ENCODE measurements at regions of chr17 and their contacts with region 1.

Region 1: DNA sequence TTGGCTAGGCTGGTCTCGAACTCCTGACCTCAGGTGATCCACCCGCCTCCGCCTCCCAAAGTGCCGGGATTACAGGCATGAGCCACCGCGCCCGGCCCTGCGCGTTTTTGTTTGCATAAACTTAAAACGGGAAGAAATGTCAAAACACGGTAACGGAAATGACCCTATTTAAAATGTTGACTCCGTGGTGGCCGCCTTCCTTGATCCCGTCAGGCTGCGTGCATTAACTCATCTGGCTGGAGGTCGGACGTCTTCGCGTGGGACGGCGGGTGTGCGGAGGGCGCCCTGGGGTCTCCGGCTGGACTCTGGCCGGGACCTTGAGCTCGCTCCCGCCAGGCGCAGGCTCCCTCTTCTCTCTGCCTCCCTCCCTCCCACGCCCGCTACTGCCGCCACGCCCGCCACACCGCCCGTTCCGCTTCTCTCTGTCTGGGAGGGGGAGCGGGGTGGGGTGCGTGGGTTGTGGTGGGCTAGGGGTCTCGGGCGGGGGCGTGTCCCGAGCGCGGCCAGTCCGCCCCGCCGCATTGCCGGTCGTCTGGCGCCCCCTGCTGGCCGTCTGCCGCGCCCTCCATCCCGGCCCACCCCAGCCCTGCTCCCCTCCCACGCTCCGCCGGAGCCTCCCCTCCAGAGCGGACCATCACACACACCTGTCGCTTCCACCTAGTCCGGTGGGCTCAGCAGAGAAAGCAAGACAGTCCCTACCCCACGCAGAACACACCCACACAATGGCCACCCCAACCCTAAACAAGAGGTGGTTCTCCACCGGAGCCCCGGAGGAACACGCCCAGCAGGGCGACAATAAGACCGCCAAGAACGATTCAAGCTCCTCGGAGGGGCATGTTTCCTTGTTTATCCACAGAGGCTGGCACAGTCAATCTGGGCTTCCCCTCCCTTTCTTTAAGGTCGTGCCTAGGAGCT is 1.2 kb upstream of the CCDC42 start:
- DNase-seq: peak; percentile 62
- H3K4me3 ChIP-seq: peak overlapping the region; percentile 23 to 58 (median 30)
- H3K27ac ChIP-seq: no peak overlapping the region
- H3K4me1 ChIP-seq: peaks cover 5% of the 10 kb centered on the region
- H3K27me3 ChIP-seq: peaks cover 12 to 13% of the 10 kb centered on the region in 2 experiments
- CTCF ChIP-seq: peak; percentile 51 to 86
- POLR2A ChIP-seq: no peak

Region 2: GRCh38 chr17:8383143-8383822 is 362.6 kb before region 1 on chr17 and contains the start of gene RPL26:
- CTCF ChIA-PET with region 1: interaction called, 19 read pairs
- POLR2A ChIA-PET with region 1: no interaction called
- dilution Hi-C with region 1: no loop called
- intact Hi-C with region 1: loop called (anchors 1 kb)
- DNase-seq: peak; percentile 98
- H3K4me3 ChIP-seq: peak within 1 kb of the TSS; percentile 76 to 100 (median 99)
- H3K27ac ChIP-seq: peak within 1 kb of the TSS; percentile 78
- H3K4me1 ChIP-seq: peaks cover 39% of the 10 kb centered on the region
- H3K27me3 ChIP-seq: no peaks in the 10 kb centered on the region
- CTCF ChIP-seq: peak; percentile 69 to 95
- POLR2A ChIP-seq: peak; percentile 97
- total RNA-seq, gene RPL26: 1,739 and 1,805 TPM in 2 replicates

Region 3: DNA sequence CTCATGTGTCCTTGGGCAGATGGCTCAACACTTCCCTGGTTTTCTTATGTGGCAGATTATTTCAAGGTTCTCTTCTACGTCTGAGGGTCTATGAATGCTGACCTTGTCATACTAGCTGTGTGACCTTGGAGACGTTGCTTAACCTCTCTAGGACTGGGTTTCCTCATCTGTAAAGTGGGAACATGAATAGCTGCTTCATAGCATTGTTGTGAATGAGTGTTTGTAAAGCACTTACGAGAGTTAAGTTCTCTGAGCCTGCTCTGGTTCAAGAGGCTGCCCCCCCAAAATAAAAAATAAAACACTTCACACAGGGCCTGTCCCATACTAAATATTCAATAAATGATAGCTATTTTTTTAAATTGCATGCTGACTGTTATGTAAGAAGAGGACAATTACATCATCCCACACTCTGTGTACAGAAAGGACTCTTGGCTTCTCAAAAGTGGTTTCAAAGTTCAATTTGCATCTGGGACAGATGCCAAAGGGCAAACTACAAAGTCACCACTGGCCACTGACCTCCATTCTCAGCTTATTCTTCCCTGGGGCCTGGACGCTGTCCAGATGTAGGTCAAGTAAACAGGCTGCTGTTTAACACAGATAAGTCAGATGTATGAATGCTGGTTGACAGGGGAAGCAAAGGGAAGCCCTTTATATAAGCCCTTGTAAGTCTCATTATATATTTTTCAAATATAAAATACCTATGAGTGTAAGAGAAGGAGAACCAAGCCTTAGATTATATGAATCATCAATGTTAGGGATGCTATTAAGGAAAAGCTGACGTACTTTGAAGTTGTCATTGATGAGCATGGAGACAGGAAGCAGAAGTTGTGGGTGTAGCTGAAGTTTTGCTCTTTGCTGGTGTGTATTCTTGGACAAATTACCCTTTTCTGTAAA is 325.6 kb before region 1 on chr17:
- CTCF ChIA-PET with region 1: interaction called, 11 read pairs
- POLR2A ChIA-PET with region 1: no interaction called
- dilution Hi-C with region 1: no loop called
- intact Hi-C with region 1: no loop called
- DNase-seq: peak; percentile 98
- H3K4me3 ChIP-seq: no peak overlapping the region
- H3K27ac ChIP-seq: no peak overlapping the region
- H3K4me1 ChIP-seq: peaks cover 12% of the 10 kb centered on the region
- H3K27me3 ChIP-seq: peaks cover 2 to 6% of the 10 kb centered on the region in 2 experiments
- CTCF ChIP-seq: no peak
- POLR2A ChIP-seq: peak; percentile 55

Region 4: DNA sequence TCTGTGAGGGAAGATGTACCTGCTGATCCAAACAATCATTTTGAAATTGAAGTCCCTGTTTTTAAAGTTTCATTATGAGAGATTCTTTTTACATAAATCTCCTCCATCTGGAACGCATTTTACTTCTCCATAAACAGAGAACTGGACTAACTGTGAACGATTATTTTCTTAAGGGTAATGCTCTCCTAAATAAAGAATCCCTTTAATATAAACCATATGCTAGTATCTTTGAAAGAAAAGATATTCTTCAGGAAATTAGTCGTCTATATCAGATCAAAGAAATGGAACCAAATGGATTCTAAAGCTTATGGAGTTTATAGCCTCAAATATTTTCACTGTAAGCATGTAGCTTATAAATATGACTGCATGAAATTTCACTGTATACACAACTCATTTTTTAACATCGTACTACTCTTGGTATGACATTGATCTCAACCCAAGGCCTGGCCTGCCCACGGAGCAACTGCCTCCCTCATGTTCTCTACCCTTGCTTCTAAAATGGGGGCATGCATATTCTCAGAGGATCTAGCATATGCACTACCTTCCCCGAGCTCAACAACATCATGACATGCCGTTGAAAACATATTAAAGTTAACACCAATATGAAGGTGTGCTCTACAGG is 181.8 kb before region 1 on chr17:
- CTCF ChIA-PET with region 1: interaction called, 12 read pairs
- POLR2A ChIA-PET with region 1: no interaction called
- dilution Hi-C with region 1: no loop called
- intact Hi-C with region 1: no loop called
- DNase-seq: no peak
- H3K4me3 ChIP-seq: no peak overlapping the region
- H3K27ac ChIP-seq: no peak overlapping the region
- H3K4me1 ChIP-seq: no peaks in the 10 kb centered on the region
- H3K27me3 ChIP-seq: no peaks in the 10 kb centered on the region
- CTCF ChIP-seq: no peak
- POLR2A ChIP-seq: no peak

Region 5: DNA sequence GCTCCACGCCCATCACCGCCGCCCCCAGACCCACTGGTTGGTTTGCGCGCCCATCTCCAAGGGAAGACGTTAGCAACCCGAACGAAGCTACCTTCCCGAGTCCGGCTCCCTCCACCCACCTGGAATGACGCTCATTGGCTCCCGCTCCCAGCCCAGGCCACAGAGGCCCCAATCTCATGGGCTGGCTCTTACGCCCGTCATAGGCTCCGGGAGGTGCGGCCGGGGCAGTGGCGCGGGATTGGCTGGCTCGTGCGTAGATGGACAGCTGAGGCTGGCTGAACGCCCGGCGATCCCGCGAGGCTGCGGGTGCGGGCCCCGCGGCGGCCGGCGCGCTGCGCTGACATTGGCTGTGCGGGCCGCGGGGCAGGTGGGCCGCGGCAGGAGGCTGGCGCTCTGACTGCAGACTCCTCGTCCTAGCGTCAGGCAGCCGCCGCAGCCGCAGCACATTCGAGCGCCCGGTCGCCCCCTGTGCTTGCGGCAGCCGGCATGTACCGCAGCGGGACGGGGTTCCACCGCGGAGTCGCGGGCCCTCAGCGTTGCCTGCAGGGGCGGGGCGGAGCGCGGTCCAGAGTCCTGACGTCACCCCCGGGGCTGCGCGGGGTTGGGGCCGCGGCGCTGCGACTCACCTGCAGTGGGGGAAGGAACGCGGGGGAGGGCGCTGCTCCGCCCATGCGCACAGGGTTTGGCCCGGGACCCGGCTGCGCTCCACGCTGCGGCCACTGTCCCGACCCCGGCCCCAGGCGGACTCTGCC is 114.9 kb before region 1 on chr17:
- CTCF ChIA-PET with region 1: interaction called, 8 read pairs
- POLR2A ChIA-PET with region 1: no interaction called
- dilution Hi-C with region 1: no loop called
- intact Hi-C with region 1: loop called (anchors 1 kb)
- DNase-seq: peak; percentile 100
- H3K4me3 ChIP-seq: peak overlapping the region; percentile 68 to 99 (median 98)
- H3K27ac ChIP-seq: peak overlapping the region; percentile 35
- H3K4me1 ChIP-seq: peaks cover 15% of the 10 kb centered on the region
- H3K27me3 ChIP-seq: peaks cover 0 to 5% of the 10 kb centered on the region in 2 experiments
- CTCF ChIP-seq: no peak
- POLR2A ChIP-seq: no peak

Region 6: GRCh38 chr17:8725881-8726876 is 19.7 kb before region 1 on chr17:
- CTCF ChIA-PET with region 1: interaction called, 14 read pairs
- POLR2A ChIA-PET with region 1: no interaction called
- dilution Hi-C with region 1: no loop called
- intact Hi-C with region 1: no loop called
- DNase-seq: no peak
- H3K4me3 ChIP-seq: no peak overlapping the region
- H3K27ac ChIP-seq: no peak overlapping the region
- H3K4me1 ChIP-seq: no peaks in the 10 kb centered on the region
- H3K27me3 ChIP-seq: peaks cover 0 to 4% of the 10 kb centered on the region in 2 experiments
- CTCF ChIP-seq: no peak
- POLR2A ChIP-seq: no peak

Measured in endothelial cell of umbilical vein (primary cell).